Naive thymus-derived CD4-positive, alpha-beta T cell (primary cell): ENCODE measurements at regions of chr1 and their contacts with region 1.

Region 1: GRCh38 chr1:154936555-154937084 is at the start of gene PMVK:
- DNase-seq: peak; percentile 84 to 99 (median 97)
- ATAC-seq: peak; percentile 92
- H3K4me3 ChIP-seq: peak within 1 kb of the TSS; percentile 68
- H3K4me3 Mint-ChIP-seq: peak within 1 kb of the TSS; percentile 86 to 99 (median 95)
- H3K27ac ChIP-seq: peak within 1 kb of the TSS; percentile 97
- H3K27ac Mint-ChIP-seq: peak within 1 kb of the TSS; percentile 96 to 100 (median 99)
- H3K4me1 ChIP-seq: peaks cover 25 to 38% of the 10 kb centered on the region in 2 donors
- H3K4me1 Mint-ChIP-seq: peaks cover 41 to 68% (median 50%) of the 10 kb centered on the region in 7 donors
- H3K27me3 ChIP-seq: no peaks in the 10 kb centered on the region
- H3K27me3 Mint-ChIP-seq: no peaks in the 10 kb centered on the region
- total RNA-seq, gene PMVK: 11.3 to 35.1 (median 12.6) TPM

Region 2: DNA sequence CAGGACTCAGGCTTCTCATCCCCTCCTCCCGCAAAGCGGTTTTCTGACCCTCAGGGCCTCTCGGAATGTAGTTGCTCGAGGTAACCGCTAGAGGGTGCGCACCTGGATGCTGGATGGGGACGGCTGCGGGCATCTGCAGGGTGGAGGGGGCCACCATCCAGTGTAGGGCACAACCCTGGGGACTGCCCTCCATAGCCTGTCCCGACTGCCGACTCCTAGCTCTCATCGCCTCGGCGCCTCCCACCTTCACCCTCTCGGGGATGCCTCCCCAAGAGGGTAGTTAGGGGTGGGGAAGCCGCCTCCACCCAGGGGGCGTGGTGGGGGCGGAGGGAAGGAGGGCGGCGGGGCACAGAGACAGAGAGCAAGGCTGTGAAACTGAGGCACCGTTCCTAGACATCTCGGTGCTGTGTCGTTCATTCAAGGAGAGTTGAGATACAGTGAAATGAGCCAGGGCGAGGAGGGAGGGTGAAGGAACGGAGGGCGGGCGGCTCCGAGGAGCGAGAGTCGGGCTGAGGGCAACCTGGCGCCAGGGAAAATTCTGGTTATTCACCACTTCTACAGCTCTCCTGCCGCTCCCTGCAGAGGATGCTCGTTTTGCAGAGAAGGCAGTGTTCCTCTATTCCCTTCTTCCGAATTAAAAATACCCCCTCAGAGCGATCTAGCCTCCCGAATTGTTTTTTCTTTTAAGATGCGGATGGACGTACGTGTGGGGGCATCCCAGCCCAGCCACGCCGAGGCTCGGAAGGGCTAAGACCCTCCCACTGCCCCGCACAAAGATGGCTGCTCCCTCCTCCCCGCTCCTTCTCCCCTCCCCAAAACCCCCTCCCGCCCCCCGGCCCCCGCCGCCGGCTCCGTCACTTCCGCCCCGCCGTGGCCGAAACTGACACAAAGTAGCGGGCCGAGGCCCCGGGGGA is 611.7 kb before region 1 on chr1 and contains the start of gene ATP8B2:
- CTCF ChIA-PET with region 1: no interaction called
- POLR2A ChIA-PET with region 1: no interaction called
- intact Hi-C with region 1: loop called in 1 of 2 experiments (anchors 10 kb)
- DNase-seq: peak; percentile 60 to 82 (median 77)
- ATAC-seq: peak; percentile 80
- H3K4me3 ChIP-seq: peak within 1 kb of the TSS; percentile 79
- H3K4me3 Mint-ChIP-seq: peak within 1 kb of the TSS; percentile 92 to 98 (median 96)
- H3K27ac ChIP-seq: peak within 1 kb of the TSS; percentile 94
- H3K27ac Mint-ChIP-seq: peak within 1 kb of the TSS; percentile 80 to 95 (median 92)
- H3K4me1 ChIP-seq: peaks cover 24 to 36% of the 10 kb centered on the region in 2 donors
- H3K4me1 Mint-ChIP-seq: peaks cover 27 to 42% (median 38%) of the 10 kb centered on the region in 7 donors
- H3K27me3 ChIP-seq: no peaks in the 10 kb centered on the region
- H3K27me3 Mint-ChIP-seq: peaks cover 0 to 31% (median 0%) of the 10 kb centered on the region in 5 donors
- total RNA-seq, gene ATP8B2: 105 to 130 (median 117) TPM

Region 3: GRCh38 chr1:154627257-154628120 is 309.1 kb before region 1 on chr1:
- CTCF ChIA-PET with region 1: no interaction called
- POLR2A ChIA-PET with region 1: no interaction called
- intact Hi-C with region 1: loop called in 1 of 2 experiments (anchors 1 kb)
- DNase-seq: peak; percentile 78 to 92 (median 90)
- ATAC-seq: peak; percentile 81
- H3K4me3 ChIP-seq: peak overlapping the region; percentile 72
- H3K4me3 Mint-ChIP-seq: peak overlapping the region; percentile 85 to 100 (median 94)
- H3K27ac ChIP-seq: peak overlapping the region; percentile 99
- H3K27ac Mint-ChIP-seq: peak overlapping the region; percentile 98 to 100 (median 99)
- H3K4me1 ChIP-seq: peaks cover 15% of the 10 kb centered on the region in 2 donors
- H3K4me1 Mint-ChIP-seq: peaks cover 20 to 54% (median 44%) of the 10 kb centered on the region in 7 donors
- H3K27me3 ChIP-seq: no peaks in the 10 kb centered on the region
- H3K27me3 Mint-ChIP-seq: peaks cover 0 to 20% (median 7%) of the 10 kb centered on the region in 5 donors

Region 4: DNA sequence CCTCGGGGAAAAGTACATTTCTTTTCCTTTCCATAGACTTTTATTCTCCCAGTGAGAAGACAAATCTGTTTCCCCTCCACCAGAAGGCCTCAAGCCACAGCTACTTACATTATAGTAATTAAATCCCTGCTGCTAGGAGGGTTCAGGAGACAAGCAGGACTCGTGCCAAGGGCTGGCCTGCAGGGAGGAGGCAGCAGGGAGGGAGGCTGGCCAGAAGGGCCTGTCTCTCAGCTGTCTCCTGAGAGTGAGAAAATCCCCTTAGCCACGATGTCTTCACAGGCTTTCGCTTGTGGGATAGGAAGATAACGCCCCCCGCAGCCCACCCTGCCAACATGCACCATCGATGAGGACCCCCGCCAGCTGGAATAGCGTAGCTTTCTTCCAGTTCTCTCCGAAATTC is 80.6 kb before region 1 on chr1:
- CTCF ChIA-PET with region 1: no interaction called
- POLR2A ChIA-PET with region 1: no interaction called
- intact Hi-C with region 1: no loop called
- DNase-seq: no peak
- ATAC-seq: no peak
- H3K4me3 ChIP-seq: no peak overlapping the region
- H3K4me3 Mint-ChIP-seq: no peak overlapping the region
- H3K27ac ChIP-seq: no peak overlapping the region
- H3K27ac Mint-ChIP-seq: no peak overlapping the region
- H3K4me1 ChIP-seq: no peaks in the 10 kb centered on the region
- H3K4me1 Mint-ChIP-seq: peaks cover 0 to 8% (median 0%) of the 10 kb centered on the region in 7 donors
- H3K27me3 ChIP-seq: no peaks in the 10 kb centered on the region
- H3K27me3 Mint-ChIP-seq: peaks cover 0 to 5% (median 0%) of the 10 kb centered on the region in 5 donors

Region 5: DNA sequence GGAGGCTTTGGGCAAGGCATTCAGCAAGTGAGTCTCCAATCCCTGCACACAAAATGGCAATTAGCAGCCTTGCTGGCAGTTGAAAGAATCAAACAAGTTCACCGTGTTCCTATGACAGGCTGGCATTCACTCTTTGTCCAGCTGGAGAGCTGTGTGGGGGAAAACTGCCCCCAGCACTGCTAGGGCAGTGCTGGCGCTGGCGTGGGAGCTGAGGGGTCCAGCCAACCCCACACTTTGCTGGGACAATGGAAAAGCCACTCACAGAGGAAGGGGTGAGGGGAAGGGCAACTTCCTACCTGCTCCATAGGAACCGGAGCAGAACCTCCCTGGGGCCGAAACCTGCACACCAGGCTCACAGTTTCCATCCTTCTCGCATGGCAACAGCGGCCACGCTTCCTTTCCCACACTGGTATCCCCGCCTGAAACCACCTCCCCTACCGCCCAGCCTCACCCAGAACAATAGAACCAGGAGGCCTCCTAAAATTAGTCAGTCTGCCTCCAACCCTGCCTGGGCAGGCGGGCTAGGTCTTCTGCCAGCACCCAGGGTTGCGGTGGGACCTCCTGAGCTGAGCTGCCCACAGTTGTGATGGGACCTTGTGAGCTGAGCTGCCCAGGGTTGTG is 39.7 kb before region 1 on chr1:
- CTCF ChIA-PET with region 1: no interaction called
- POLR2A ChIA-PET with region 1: no interaction called
- intact Hi-C with region 1: no loop called
- DNase-seq: no peak
- ATAC-seq: no peak
- H3K4me3 ChIP-seq: no peak overlapping the region
- H3K4me3 Mint-ChIP-seq: no peak overlapping the region
- H3K27ac ChIP-seq: no peak overlapping the region
- H3K27ac Mint-ChIP-seq: no peak overlapping the region
- H3K4me1 ChIP-seq: no peaks in the 10 kb centered on the region
- H3K4me1 Mint-ChIP-seq: peaks cover 0 to 5% (median 0%) of the 10 kb centered on the region in 7 donors
- H3K27me3 ChIP-seq: no peaks in the 10 kb centered on the region
- H3K27me3 Mint-ChIP-seq: peaks cover 0 to 22% (median 3%) of the 10 kb centered on the region in 5 donors

Region 6: DNA sequence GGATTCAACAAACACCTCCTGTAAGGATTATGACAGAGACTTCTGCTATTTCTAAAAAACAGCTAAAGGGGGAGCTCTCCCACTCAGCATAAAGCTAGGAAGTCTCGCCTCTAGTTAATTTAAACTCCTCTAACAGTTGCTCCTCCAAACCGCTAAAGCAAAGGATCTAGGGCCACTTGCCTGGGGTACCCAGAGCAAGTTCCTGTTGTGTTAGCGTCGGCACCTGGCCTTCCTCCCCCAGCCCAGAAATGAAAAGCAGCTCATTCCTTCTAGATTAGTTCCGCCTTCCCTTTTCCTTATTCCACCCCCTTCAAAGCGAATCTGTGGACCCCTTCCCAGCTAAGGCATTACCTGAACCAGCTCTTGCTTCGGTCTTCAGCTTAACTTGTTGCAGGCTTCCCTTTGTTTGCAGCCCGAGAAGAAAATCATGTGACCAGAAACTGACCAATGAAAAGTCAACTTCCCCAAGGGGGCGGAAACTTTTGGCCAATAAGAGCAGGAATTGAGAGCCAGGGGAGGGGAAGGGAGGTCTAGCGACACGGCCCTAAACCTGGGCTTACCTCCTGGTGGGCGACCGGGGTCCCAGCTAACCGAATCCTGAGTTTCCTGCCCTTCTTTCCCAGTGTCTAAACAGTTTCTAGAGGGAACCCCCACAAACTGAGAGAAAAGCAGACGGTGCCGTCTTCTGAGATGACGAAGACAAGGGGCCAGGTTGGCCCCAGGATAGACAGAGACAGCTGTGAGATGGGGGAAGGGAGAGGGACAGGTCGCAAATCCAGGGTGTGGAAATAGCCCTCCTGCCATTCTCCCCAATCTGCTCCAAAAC is 19.3 kb after region 1 on chr1 and contains the start of gene PBXIP1:
- CTCF ChIA-PET with region 1: interaction called, 10 read pairs
- POLR2A ChIA-PET with region 1: interaction called, 93 read pairs
- intact Hi-C with region 1: loop called (anchors 1 kb)
- DNase-seq: peak; percentile 56 to 95 (median 92)
- ATAC-seq: peak; percentile 58
- H3K4me3 ChIP-seq: peak within 1 kb of the TSS; percentile 92
- H3K4me3 Mint-ChIP-seq: peak within 1 kb of the TSS; percentile 92 to 99 (median 98)
- H3K27ac ChIP-seq: peak within 1 kb of the TSS; percentile 96
- H3K27ac Mint-ChIP-seq: peak within 1 kb of the TSS; percentile 97 to 100 (median 99)
- H3K4me1 ChIP-seq: peaks cover 53 to 54% of the 10 kb centered on the region in 2 donors
- H3K4me1 Mint-ChIP-seq: peaks cover 59 to 87% (median 76%) of the 10 kb centered on the region in 7 donors
- H3K27me3 ChIP-seq: no peaks in the 10 kb centered on the region
- H3K27me3 Mint-ChIP-seq: no peaks in the 10 kb centered on the region
- total RNA-seq, gene PBXIP1: 107 to 390 (median 383) TPM

Region 7: DNA sequence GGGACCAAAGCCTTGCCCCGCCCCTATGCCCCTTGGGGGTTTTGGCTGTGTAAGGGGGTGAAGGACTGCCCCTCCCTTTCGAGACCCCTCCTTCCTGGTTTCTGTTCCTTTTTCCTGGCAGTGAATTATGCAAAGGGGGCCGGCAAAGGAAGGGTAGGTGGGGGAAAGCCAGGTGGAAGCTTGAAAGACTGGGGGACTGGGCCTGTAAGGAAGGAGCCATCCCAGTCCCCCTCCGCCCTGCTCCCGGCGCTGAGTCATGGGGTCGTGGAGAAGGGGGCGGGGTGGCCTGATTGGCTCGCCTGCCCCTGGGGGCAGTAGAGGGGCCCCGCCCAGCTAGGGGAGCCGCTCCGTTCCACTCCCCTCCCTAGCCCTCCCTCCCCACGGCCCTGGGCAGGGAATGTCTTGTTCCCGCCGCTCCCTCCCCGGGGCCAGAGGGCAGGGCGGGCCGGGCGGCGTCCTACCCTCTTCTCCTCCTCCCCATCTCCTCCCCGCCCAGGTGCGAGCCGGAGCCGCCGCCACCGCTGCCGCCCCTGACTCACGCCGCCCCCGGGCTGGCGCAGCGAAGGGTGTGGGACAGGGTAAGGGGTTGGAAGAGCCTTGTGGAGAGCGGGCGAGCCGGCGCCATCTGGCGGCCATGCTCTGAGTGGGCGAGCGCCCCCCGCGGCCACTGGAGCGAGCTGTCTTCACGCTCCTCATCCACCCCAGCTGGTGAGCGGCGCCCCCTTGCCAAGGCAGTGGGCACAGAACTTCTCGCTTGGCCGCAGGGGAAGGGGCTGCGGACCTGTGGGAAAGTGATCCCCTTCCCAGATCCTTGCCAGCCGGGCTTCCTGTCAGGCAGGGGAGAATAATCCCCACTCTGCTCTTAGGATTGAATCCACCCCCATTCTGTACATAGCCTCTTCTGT is 80.7 kb after region 1 on chr1:
- CTCF ChIA-PET with region 1: interaction called, 5 read pairs
- POLR2A ChIA-PET with region 1: interaction called, 16 read pairs
- intact Hi-C with region 1: loop called in 1 of 2 experiments (anchors 1 kb)
- DNase-seq: peak; percentile 85 to 93 (median 89)
- ATAC-seq: peak; percentile 98
- H3K4me3 ChIP-seq: peak overlapping the region; percentile 50
- H3K4me3 Mint-ChIP-seq: peak overlapping the region; percentile 51 to 84 (median 70)
- H3K27ac ChIP-seq: peak overlapping the region; percentile 83
- H3K27ac Mint-ChIP-seq: peak overlapping the region; percentile 38 to 98 (median 94)
- H3K4me1 ChIP-seq: peaks cover 38 to 65% of the 10 kb centered on the region in 2 donors
- H3K4me1 Mint-ChIP-seq: peaks cover 38 to 83% (median 71%) of the 10 kb centered on the region in 7 donors
- H3K27me3 ChIP-seq: no peaks in the 10 kb centered on the region
- H3K27me3 Mint-ChIP-seq: no peaks in the 10 kb centered on the region

Region 8: GRCh38 chr1:155244368-155245162 is 307.9 kb after region 1 on chr1:
- CTCF ChIA-PET with region 1: no interaction called
- POLR2A ChIA-PET with region 1: no interaction called
- intact Hi-C with region 1: loop called in 1 of 2 experiments (anchors 5 kb)
- DNase-seq: peak; percentile 76 to 96 (median 94)
- ATAC-seq: peak; percentile 92
- H3K4me3 ChIP-seq: peak overlapping the region; percentile 63
- H3K4me3 Mint-ChIP-seq: peak overlapping the region; percentile 84 to 97 (median 91)
- H3K27ac ChIP-seq: peak overlapping the region; percentile 73
- H3K27ac Mint-ChIP-seq: peak overlapping the region; percentile 94 to 100 (median 98)
- H3K4me1 ChIP-seq: peaks cover 19 to 20% of the 10 kb centered on the region in 2 donors
- H3K4me1 Mint-ChIP-seq: peaks cover 31 to 50% (median 44%) of the 10 kb centered on the region in 7 donors
- H3K27me3 ChIP-seq: no peaks in the 10 kb centered on the region
- H3K27me3 Mint-ChIP-seq: peaks cover 0 to 6% (median 3%) of the 10 kb centered on the region in 5 donors